ENCODE measurements at regions of chr2 and their contacts with region 1.

Region 1: GRCh38 chr2:224145751-224146355 is 106.8 kb upstream of the SERPINE2 start:
- DNase-seq: peak; percentile 80
- ATAC-seq: peak; percentile 44
- H3K4me3 ChIP-seq: no peak overlapping the region
- H3K27ac ChIP-seq: no peak overlapping the region
- H3K4me1 ChIP-seq: peaks cover 19% of the 10 kb centered on the region
- H3K27me3 ChIP-seq: no peaks in the 10 kb centered on the region
- CTCF ChIP-seq: no peak
- POLR2A ChIP-seq: no peak
- RAD21 ChIP-seq: no peak

Region 2: DNA sequence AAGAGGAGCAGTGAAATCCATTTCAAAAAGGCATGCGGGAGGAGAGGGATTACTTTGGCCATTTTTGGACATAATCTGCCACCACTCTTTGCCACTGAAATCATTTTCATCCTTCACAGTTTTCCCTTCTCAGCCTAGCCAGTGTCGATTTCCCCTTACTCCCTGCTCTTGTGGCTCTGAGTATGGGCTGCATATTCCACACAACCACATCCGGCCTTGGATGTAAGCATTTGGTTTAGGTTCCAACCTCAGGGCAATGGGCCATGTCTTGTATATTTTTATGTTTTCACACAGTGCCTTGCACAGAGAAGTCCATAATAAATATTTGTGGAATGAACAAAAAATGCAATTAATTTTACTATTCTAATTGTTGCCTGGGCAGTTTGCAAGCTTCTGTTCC is 99.1 kb before region 1 on chr2:
- CTCF ChIA-PET with region 1: no interaction called
- POLR2A ChIA-PET with region 1: no interaction called
- dilution Hi-C with region 1: no loop called
- in situ Hi-C with region 1: no loop called
- intact Hi-C with region 1: loop called (anchors 5 kb)
- DNase-seq: peak; percentile 71
- ATAC-seq: peak; percentile 80
- H3K4me3 ChIP-seq: no peak overlapping the region
- H3K27ac ChIP-seq: no peak overlapping the region
- H3K4me1 ChIP-seq: peaks cover 5% of the 10 kb centered on the region
- H3K27me3 ChIP-seq: peaks cover 26% of the 10 kb centered on the region
- CTCF ChIP-seq: no peak
- POLR2A ChIP-seq: no peak
- RAD21 ChIP-seq: no peak

Region 3: DNA sequence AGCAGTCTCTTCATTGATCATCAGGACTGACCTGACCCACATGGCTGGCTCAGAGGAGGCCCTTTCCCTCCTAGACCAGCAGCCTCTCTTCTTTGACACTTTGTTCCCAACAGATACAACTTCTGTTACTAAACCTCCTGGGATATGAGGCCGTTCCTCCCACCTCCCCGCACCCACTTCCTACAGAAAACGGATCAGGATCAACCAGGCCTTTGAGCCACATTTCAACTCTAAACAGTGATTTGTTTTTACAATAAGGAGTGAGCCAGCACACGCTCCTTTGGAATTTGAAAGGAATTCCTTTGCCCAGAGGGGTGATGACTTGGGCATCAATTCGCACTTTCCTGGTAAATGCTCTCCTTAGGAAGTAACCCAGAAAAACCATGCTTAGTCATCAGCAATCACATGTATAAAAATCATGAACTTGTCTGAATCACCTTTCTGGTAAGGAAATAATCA is 75.6 kb after region 1 on chr2:
- CTCF ChIA-PET with region 1: no interaction called
- POLR2A ChIA-PET with region 1: no interaction called
- dilution Hi-C with region 1: no loop called
- in situ Hi-C with region 1: no loop called
- intact Hi-C with region 1: loop called (anchors 2 kb)
- DNase-seq: peak; percentile 93
- ATAC-seq: peak; percentile 87
- H3K4me3 ChIP-seq: no peak overlapping the region
- H3K27ac ChIP-seq: peak overlapping the region; percentile 64
- H3K4me1 ChIP-seq: peaks cover 9% of the 10 kb centered on the region
- H3K27me3 ChIP-seq: no peaks in the 10 kb centered on the region
- CTCF ChIP-seq: no peak
- POLR2A ChIP-seq: no peak
- RAD21 ChIP-seq: peak; percentile 12; the same call in 1 of the 2 replicates

Region 4: GRCh38 chr2:224278531-224278930 is 132.7 kb after region 1 on chr2:
- CTCF ChIA-PET with region 1: no interaction called
- POLR2A ChIA-PET with region 1: no interaction called
- dilution Hi-C with region 1: no loop called
- in situ Hi-C with region 1: no loop called
- intact Hi-C with region 1: loop called (anchors 5 kb)
- DNase-seq: peak; percentile 33
- ATAC-seq: peak; percentile 60
- H3K4me3 ChIP-seq: no peak overlapping the region
- H3K27ac ChIP-seq: no peak overlapping the region
- H3K4me1 ChIP-seq: no peaks in the 10 kb centered on the region
- H3K27me3 ChIP-seq: peaks cover 4% of the 10 kb centered on the region; the same call in 1 of the 2 replicates
- CTCF ChIP-seq: no peak
- POLR2A ChIP-seq: no peak
- RAD21 ChIP-seq: no peak; the same call in 1 of the 2 replicates

Measured in IMR-90 (cell line).